ENCODE measurements at regions of chr1 and their contacts with region 1.

Region 1: GRCh38 chr1:3668585-3669300 is 16.4 kb downstream of the TP73 start:
- DNase-seq: no peak
- H3K4me3 ChIP-seq: no peak overlapping the region
- H3K27ac ChIP-seq: no peak overlapping the region
- H3K4me1 ChIP-seq: peaks cover 49% of the 10 kb centered on the region
- CTCF ChIP-seq: no peak

Region 2: GRCh38 chr1:3656450-3657095 is 12.2 kb before region 1 on chr1:
- CTCF ChIA-PET with region 1: no interaction called
- POLR2A ChIA-PET with region 1: interaction called, 18 read pairs
- intact Hi-C with region 1: no loop called
- DNase-seq: no peak
- H3K4me3 ChIP-seq: no peak overlapping the region
- H3K27ac ChIP-seq: no peak overlapping the region
- H3K4me1 ChIP-seq: peaks cover 20% of the 10 kb centered on the region
- CTCF ChIP-seq: no peak

Region 3: GRCh38 chr1:3717715-3718601 is 49.2 kb after region 1 on chr1:
- CTCF ChIA-PET with region 1: no interaction called
- POLR2A ChIA-PET with region 1: interaction called, 3 read pairs
- intact Hi-C with region 1: loop called (anchors 2 kb)
- DNase-seq: peak; percentile 25
- H3K4me3 ChIP-seq: no peak overlapping the region
- H3K27ac ChIP-seq: no peak overlapping the region
- H3K4me1 ChIP-seq: peaks cover 24% of the 10 kb centered on the region
- CTCF ChIP-seq: no peak

Measured in OCI-LY7 (cell line).